ENCODE measurements at regions of chr19 and their contacts with region 1.

Region 1: DNA sequence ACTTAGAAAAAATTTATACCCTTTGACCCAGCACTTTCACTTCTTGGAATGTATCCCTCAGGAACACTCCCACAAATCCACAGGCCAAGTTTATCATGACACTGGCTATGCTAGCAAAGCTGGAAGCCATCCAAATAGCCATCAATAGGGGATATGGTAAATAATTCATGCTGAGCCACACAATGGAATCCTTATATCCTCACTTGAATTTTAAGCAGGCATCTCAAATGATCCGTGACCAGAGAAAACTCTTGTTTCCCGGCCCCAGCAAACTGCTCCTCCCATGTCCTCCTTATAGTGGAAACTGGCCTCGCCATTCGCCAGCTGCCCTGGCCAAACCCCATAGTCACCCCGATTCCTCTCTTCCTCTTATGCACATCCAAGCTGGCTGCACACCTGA is 37.6 kb downstream of the GRIK5 start:
- DNase-seq: no peak
- H3K4me3 ChIP-seq: no peak overlapping the region
- H3K27ac ChIP-seq: no peak overlapping the region
- H3K27me3 ChIP-seq: peaks cover 11% of the 10 kb centered on the region
- CTCF ChIP-seq: no peak

Region 2: GRCh38 chr19:41959056-41960053 is 73.1 kb before region 1 on chr19 and contains the start of gene RABAC1:
- CTCF ChIA-PET with region 1: interaction called, 10 read pairs
- POLR2A ChIA-PET with region 1: no interaction called
- DNase-seq: peak; percentile 75
- H3K4me3 ChIP-seq: peak within 1 kb of the TSS; percentile 89
- H3K27ac ChIP-seq: peak within 1 kb of the TSS; percentile 95
- H3K27me3 ChIP-seq: no peaks in the 10 kb centered on the region
- CTCF ChIP-seq: peak; percentile 29
- polyA plus RNA-seq, gene RABAC1: 149 and 215 TPM in 2 replicates

Region 3: DNA sequence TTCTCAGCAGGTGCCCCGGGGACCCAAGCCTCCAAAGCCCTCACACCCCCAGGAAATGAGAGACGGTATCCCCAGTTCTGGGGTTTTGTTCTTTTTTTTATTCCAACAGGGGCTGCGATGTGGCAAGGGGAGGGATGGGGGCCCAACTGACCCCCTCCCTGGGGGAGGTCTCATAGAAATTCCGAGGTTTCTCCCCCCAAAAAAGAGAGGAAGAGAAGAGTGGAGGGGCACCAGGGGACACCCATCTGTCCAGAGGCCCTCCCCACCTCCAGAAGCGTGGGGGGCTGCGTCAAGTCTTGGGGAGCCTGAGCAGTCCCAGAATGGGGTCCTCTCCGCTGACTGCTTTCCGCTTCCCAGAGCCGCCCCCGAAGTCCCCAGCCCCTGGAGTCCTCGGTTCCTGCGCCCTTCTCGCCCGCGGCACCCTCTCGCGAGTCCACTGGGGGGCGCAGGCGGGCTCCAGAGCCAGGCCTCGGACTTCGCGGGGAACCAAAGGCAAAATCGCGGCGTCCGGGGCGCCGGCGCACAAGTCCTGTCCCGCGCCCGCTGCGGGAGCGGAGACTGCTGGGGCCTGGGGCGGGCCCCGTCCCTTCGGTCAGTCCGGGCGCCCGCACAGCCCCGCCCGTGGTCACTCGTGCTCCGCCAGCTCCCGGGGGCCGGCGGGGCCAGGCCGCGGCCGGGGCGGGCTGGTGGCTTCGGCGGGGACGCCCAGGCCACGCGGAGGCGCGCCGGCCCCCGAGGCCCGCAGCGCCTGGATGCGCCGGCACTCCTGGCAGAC is 34.0 kb before region 1 on chr19:
- CTCF ChIA-PET with region 1: interaction called, 18 read pairs
- POLR2A ChIA-PET with region 1: no interaction called
- DNase-seq: no peak
- H3K4me3 ChIP-seq: no peak overlapping the region
- H3K27ac ChIP-seq: no peak overlapping the region
- H3K27me3 ChIP-seq: peaks cover 56% of the 10 kb centered on the region
- CTCF ChIP-seq: peak; percentile 63

Region 4: GRCh38 chr19:42010245-42011126 is 21.9 kb before region 1 on chr19:
- CTCF ChIA-PET with region 1: interaction called, 21 read pairs
- POLR2A ChIA-PET with region 1: no interaction called
- DNase-seq: no peak
- H3K4me3 ChIP-seq: no peak overlapping the region
- H3K27ac ChIP-seq: no peak overlapping the region
- H3K27me3 ChIP-seq: no peaks in the 10 kb centered on the region
- CTCF ChIP-seq: no peak

Region 5: DNA sequence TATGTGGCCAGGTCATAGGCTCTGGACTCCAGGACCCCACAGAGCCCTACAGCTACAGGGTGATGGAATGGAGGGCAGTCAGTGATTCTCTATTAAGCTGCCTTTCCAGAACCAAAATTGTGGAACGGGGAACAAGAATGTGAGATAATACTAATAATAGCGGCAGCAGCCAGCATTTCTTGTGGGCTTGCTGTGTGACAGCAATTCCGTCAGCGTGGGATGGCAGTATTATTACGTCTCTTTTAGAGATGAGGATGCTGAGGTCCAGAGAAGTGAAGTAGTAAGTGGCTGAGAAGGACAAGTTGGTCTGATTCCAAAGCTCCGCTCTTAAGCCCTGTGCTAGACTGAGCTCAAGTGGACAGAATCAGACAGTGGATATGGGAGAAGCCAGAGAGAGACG is 13.1 kb after region 1 on chr19:
- CTCF ChIA-PET with region 1: interaction called, 25 read pairs
- POLR2A ChIA-PET with region 1: no interaction called
- DNase-seq: no peak
- H3K4me3 ChIP-seq: no peak overlapping the region
- H3K27ac ChIP-seq: no peak overlapping the region
- H3K27me3 ChIP-seq: peaks cover 23% of the 10 kb centered on the region
- CTCF ChIP-seq: no peak

Measured in AG04450 (cell line).